ENCODE measurements at regions of chr3 and their contacts with region 1.

Region 1: GRCh38 chr3:195001961-195002861 is 268.7 kb downstream of the XXYLT1 start:
- DNase-seq: peak; percentile 96
- H3K4me3 Mint-ChIP-seq: no peak overlapping the region
- H3K27ac Mint-ChIP-seq: no peak overlapping the region
- H3K4me1 Mint-ChIP-seq: peaks cover 25% of the 10 kb centered on the region
- H3K27me3 Mint-ChIP-seq: peaks cover 74% of the 10 kb centered on the region
- CTCF ChIP-seq: peak; percentile 85

Region 2: GRCh38 chr3:193391902-193392301 is 1610.3 kb before region 1 on chr3:
- CTCF ChIA-PET with region 1: no interaction called
- intact Hi-C with region 1: no loop called
- DNase-seq: no peak
- H3K4me3 Mint-ChIP-seq: no peak overlapping the region
- H3K27ac Mint-ChIP-seq: no peak overlapping the region
- H3K4me1 Mint-ChIP-seq: no peaks in the 10 kb centered on the region
- H3K27me3 Mint-ChIP-seq: peaks cover 23% of the 10 kb centered on the region
- CTCF ChIP-seq: no peak

Region 3: DNA sequence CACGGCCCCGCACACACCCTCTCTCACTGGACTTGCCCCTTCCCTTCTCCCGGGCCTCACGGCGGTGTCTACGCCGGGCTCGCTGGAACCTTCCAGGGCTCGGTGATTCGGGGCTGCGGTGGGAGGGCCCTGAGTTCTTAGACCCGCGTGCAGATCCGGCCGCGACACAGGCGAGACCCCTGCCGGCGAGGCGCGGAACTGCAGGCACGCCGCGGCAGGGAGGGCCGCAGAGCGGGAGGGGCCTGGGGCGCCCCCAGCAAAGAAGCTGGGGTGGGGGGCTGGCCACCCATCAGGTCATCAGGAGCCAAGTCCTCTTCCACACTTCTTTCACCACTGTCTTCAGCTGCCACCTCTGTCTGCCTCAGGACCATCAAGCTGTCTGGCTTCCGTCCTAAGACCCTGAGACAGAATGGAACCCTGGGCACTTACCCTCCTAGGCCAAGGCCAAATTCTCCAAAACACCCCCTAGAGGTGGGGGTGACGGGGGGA is 104.3 kb after region 1 on chr3:
- CTCF ChIA-PET with region 1: interaction called, 7 read pairs
- intact Hi-C with region 1: loop called (anchors 1 kb)
- DNase-seq: peak; percentile 87
- H3K4me3 Mint-ChIP-seq: peak overlapping the region; percentile 63
- H3K27ac Mint-ChIP-seq: peak overlapping the region; percentile 33
- H3K4me1 Mint-ChIP-seq: peaks cover 39% of the 10 kb centered on the region
- H3K27me3 Mint-ChIP-seq: no peaks in the 10 kb centered on the region
- CTCF ChIP-seq: peak; percentile 100